ENCODE measurements at regions of chr12 and their contacts with region 1.

Region 1: GRCh38 chr12:2794736-2795289 is at the start of gene FKBP4:
- DNase-seq: peak; percentile 75 to 95 (median 88)
- ATAC-seq: peak; percentile 92
- H3K4me3 ChIP-seq: peak within 1 kb of the TSS; percentile 69 to 71
- H3K4me3 Mint-ChIP-seq: peak within 1 kb of the TSS; percentile 91
- H3K27ac ChIP-seq: peak within 1 kb of the TSS; percentile 50 to 63
- H3K27ac Mint-ChIP-seq: peak within 1 kb of the TSS; percentile 88
- H3K4me1 ChIP-seq: peaks cover 12% of the 10 kb centered on the region
- H3K4me1 Mint-ChIP-seq: peaks cover 24% of the 10 kb centered on the region
- H3K27me3 ChIP-seq: no peaks in the 10 kb centered on the region
- H3K27me3 Mint-ChIP-seq: no peaks in the 10 kb centered on the region
- CTCF ChIP-seq: no peak
- total RNA-seq, gene FKBP4: 31.1 to 34.5 TPM

Region 2: GRCh38 chr12:2682296-2683251 is 112.2 kb before region 1 on chr12:
- CTCF ChIA-PET with region 1: interaction called, 11 read pairs
- POLR2A ChIA-PET with region 1: interaction called, 3 read pairs
- intact Hi-C with region 1: no loop called
- DNase-seq: peak in 6 of 9 experiments; percentile 33 to 72 (median 50)
- ATAC-seq: peak; percentile 79
- H3K4me3 ChIP-seq: no peak overlapping the region
- H3K4me3 Mint-ChIP-seq: no peak overlapping the region
- H3K27ac ChIP-seq: no peak overlapping the region
- H3K27ac Mint-ChIP-seq: peak overlapping the region; percentile 66
- H3K4me1 ChIP-seq: no peaks in the 10 kb centered on the region
- H3K4me1 Mint-ChIP-seq: peaks cover 7% of the 10 kb centered on the region
- H3K27me3 ChIP-seq: no peaks in the 10 kb centered on the region
- H3K27me3 Mint-ChIP-seq: no peaks in the 10 kb centered on the region
- CTCF ChIP-seq: peak; percentile 77

Region 3: DNA sequence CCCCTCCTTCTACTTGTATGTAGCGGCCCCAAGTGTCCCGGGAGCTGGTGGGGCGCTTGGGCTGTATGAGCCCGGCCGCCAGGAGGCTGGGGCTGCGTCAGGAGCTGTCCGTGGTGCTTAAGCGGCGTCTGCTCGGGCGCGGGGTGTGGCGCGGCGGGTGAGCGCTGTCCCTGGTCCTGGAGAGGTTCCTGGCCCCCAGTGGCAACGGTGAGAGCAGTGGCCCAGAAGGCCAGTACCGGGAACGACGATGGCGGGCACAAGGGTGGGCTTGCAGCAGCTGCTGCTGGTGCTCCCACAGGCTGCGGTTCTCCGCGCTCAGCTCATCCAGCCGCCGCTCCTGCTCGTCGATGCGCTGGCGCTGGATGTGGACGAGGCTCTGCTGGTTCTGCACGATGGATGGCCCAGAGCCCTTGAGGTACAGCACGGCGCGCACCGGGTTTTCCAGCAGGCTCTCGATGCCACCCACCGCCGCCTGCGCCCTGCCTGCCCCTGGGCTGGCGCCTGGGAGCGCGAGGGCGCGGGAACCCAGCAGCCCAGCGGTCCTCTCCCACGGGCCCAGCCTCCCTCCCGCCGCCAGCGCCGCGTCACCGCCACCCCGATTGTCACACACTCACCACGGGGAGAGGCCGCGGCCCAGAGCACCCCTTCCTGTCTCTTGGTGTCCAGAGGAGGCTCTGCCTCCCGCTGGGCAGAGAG is 42.0 kb before region 1 on chr12:
- CTCF ChIA-PET with region 1: no interaction called
- POLR2A ChIA-PET with region 1: no interaction called
- intact Hi-C with region 1: loop called in 1 of 2 experiments (anchors 5 kb)
- DNase-seq: peak; percentile 63 to 87 (median 80)
- ATAC-seq: peak; percentile 100
- H3K4me3 ChIP-seq: no peak overlapping the region
- H3K4me3 Mint-ChIP-seq: no peak overlapping the region
- H3K27ac ChIP-seq: no peak overlapping the region
- H3K27ac Mint-ChIP-seq: no peak overlapping the region
- H3K4me1 ChIP-seq: peaks cover 3% of the 10 kb centered on the region
- H3K4me1 Mint-ChIP-seq: no peaks in the 10 kb centered on the region
- H3K27me3 ChIP-seq: peaks cover 0 to 5% of the 10 kb centered on the region in 2 experiments
- H3K27me3 Mint-ChIP-seq: peaks cover 34% of the 10 kb centered on the region
- CTCF ChIP-seq: no peak

Region 4: DNA sequence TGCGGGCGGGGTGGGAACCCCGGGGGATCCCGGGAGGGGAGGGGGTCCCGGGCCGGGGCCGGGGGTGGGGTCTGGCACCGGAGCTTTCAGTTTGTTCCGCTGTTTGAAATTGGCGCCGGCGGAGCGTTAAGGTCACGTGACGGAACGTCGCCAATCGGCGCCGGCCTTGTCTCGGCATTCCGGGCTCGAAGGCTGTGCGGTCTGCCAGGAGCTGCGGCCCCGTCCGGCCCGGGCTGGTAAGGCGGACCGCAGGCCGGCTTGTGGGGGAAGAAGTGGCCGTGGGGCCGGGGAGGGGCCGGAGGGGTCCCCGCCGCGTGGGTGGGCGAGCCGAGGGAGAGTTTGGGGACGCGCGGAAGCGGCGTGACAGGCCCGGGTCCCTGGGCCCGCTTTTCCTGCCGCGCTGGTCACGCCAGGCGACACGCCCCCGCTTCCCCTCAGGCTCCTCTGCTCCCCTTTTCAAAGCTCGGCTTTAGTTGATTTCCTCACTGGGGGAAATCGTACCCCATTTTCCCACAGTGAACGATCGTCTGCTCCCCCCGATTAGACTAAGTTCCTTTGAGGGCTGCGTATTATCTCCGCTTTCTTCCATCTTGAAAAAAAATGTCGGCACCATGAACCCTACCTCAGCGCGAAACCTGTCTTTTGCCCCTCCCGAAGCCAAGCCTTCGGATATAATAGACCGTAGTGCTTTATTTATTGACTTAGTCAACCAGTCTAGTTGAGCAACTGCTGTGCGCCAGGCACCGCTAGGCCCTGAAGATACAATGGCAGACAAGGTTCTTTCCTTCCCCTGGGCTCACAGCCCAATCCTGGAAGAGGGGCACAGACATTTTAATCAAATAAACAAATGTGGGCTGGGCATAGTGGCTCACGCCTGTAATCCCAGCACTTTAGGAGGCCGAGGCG is 82.5 kb after region 1 on chr12 and contains the starts of genes FOXM1 and RHNO1:
- CTCF ChIA-PET with region 1: no interaction called
- POLR2A ChIA-PET with region 1: no interaction called
- intact Hi-C with region 1: loop called (anchors 1 to 5 kb)
- DNase-seq: peak; percentile 73 to 91 (median 85)
- ATAC-seq: peak; percentile 78
- H3K4me3 ChIP-seq: peak within 1 kb of the TSS; percentile 83 to 95
- H3K4me3 Mint-ChIP-seq: peak within 1 kb of the TSS; percentile 99
- H3K27ac ChIP-seq: peak within 1 kb of the TSS; percentile 90 to 91
- H3K27ac Mint-ChIP-seq: peak within 1 kb of the TSS; percentile 100
- H3K4me1 ChIP-seq: peaks cover 22% of the 10 kb centered on the region
- H3K4me1 Mint-ChIP-seq: peaks cover 37% of the 10 kb centered on the region
- H3K27me3 ChIP-seq: no peaks in the 10 kb centered on the region
- H3K27me3 Mint-ChIP-seq: no peaks in the 10 kb centered on the region
- CTCF ChIP-seq: no peak
- total RNA-seq, gene FOXM1: 0.83 to 0.95 TPM
- total RNA-seq, gene RHNO1: 22.4 to 24.4 TPM

Region 5: DNA sequence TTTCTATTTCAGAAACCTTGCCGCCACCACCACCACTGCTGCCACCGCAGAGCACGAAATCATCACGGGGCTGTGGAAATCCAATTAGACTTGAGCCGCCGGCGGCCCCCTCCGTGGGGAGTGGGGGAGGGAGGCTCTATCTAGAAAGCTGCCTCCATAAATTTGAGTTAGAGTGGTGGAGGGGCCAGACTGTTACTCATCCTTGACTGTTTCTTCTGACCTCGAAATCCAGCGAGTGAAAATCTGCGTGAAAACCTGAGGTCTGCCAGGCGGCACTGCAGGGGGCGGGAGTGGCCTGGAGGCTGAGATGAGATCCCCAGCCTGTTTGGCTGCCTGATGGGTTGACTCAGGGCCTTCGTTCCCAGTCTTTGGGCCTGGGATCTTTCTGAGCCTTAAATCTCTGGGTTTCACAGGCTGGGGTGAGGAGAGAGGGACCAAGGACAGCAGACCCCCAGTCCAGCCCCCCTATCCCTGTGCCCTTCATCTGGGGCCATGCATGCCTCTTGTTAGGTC is 312.3 kb after region 1 on chr12:
- CTCF ChIA-PET with region 1: no interaction called
- POLR2A ChIA-PET with region 1: no interaction called
- intact Hi-C with region 1: no loop called
- DNase-seq: no peak
- ATAC-seq: no peak
- H3K4me3 ChIP-seq: no peak overlapping the region
- H3K4me3 Mint-ChIP-seq: no peak overlapping the region
- H3K27ac ChIP-seq: no peak overlapping the region
- H3K27ac Mint-ChIP-seq: no peak overlapping the region
- H3K4me1 ChIP-seq: no peaks in the 10 kb centered on the region
- H3K4me1 Mint-ChIP-seq: no peaks in the 10 kb centered on the region
- H3K27me3 ChIP-seq: peaks cover 0 to 3% of the 10 kb centered on the region in 2 experiments
- H3K27me3 Mint-ChIP-seq: peaks cover 7% of the 10 kb centered on the region
- CTCF ChIP-seq: no peak

Measured in CD8-positive, alpha-beta T cell (primary cell).